ENCODE measurements at regions of chr6 and their contacts with region 1.

Region 1: GRCh38 chr6:52284460-52285176 is at the start of gene MCM3:
- DNase-seq: peak; percentile 92 to 99
- ATAC-seq: peak; percentile 97 to 100 (median 97)
- H3K4me3 ChIP-seq: peak within 1 kb of the TSS; percentile 70
- H3K4me3 Mint-ChIP-seq: peak within 1 kb of the TSS; percentile 4
- H3K27ac ChIP-seq: peak within 1 kb of the TSS; percentile 61
- H3K27ac Mint-ChIP-seq: no peak within 1 kb of the TSS
- H3K4me1 ChIP-seq: peaks cover 11% of the 10 kb centered on the region
- H3K4me1 Mint-ChIP-seq: peaks cover 31 to 33% of the 10 kb centered on the region in 2 donors
- H3K27me3 ChIP-seq: no peaks in the 10 kb centered on the region
- H3K27me3 Mint-ChIP-seq: no peaks in the 10 kb centered on the region
- CTCF ChIP-seq: no peak
- total RNA-seq, gene MCM3: 26.4 to 46.2 (median 31.5) TPM

Region 2: DNA sequence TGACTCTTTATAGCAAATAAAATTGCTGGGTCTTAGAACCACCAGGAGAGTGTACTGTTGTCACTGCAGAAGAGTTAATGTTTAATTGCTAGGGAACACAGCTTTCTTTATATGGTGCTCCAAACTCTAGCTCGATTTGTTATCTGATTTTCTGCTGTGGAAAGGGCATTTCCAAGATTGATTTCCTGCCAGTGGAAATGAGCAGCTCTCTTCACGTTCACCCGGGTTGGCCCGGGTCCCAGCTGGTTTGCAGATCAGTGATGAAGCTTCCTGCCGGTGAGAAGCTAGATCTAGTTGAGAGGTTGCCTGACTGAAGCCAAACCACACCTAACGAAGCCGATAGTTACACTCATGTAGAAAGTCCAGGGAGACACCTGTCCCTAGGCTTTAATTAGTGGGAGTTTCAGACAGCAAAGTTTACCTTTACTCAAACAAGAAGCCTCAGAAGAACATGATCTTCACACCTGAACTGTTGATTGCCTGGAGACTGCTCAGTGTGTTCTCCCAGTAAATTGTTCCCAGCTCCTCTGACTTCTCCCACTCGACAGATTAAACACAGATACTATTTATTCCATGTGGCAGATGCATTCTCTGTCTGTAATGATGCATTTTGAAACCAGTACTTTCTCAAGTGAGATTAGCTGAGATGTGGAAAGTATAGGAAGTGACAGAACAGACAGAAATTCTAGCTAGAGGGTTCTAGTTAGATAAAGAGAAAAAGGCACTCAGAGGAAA is 105.2 kb after region 1 on chr6:
- intact Hi-C with region 1: loop called (anchors 2 kb)
- DNase-seq: peak in 1 of 2 donors; percentile 81
- ATAC-seq: peak; percentile 56 to 69 (median 59)
- H3K4me3 ChIP-seq: no peak overlapping the region
- H3K4me3 Mint-ChIP-seq: peak overlapping the region; percentile 91
- H3K27ac ChIP-seq: peak overlapping the region; percentile 82
- H3K27ac Mint-ChIP-seq: peak overlapping the region; percentile 96 to 98
- H3K4me1 ChIP-seq: peaks cover 25% of the 10 kb centered on the region
- H3K4me1 Mint-ChIP-seq: peaks cover 42 to 52% of the 10 kb centered on the region in 2 donors
- H3K27me3 ChIP-seq: no peaks in the 10 kb centered on the region
- H3K27me3 Mint-ChIP-seq: no peaks in the 10 kb centered on the region
- CTCF ChIP-seq: peak; percentile 35

Region 3: DNA sequence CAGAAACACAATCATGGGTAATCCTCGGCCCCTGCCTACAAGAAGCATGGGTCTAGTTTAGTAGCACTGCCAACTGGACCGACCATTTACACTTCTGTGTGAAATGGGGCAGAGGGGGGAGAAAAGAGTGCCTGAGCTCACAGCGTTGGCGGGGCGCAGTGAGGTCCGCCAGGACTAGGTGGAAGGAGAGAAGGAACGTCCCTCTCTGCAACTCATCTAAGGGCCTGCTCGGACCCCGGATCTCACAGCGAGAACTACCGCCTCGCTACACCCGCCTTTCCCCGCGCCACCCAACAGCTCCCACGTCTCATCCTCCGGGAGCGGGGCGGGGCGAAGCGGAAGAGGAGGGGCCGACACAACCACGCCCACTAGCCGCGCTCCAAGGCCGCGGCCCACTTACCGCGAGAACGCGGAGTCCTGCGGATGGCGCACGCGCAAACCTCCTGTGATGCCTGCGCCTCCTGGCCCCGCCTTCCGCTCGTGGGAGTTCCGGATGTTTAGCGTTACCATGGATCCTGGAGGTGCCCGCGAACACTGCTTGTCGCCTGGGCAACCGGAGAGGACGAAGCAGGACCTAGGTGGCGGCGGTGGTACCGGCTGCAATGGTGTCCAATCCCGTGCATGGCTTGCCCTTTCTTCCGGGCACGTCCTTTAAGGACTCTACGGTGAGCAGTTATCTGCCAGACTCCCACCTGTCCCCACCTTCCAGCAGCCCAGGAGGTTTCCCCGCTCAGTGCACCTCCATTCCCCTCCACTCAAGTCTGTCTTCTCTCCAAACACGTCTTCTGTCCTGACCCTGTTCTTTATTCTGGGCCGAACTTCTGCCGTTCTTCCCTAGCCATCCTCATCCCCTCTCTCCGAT is 135.4 kb after region 1 on chr6 and contains the start of gene EFHC1:
- intact Hi-C with region 1: loop called (anchors 1 kb)
- DNase-seq: peak; percentile 97 to 100
- ATAC-seq: peak; percentile 91 to 98 (median 93)
- H3K4me3 ChIP-seq: peak within 1 kb of the TSS; percentile 87
- H3K4me3 Mint-ChIP-seq: no peak within 1 kb of the TSS
- H3K27ac ChIP-seq: peak within 1 kb of the TSS; percentile 71
- H3K27ac Mint-ChIP-seq: no peak within 1 kb of the TSS
- H3K4me1 ChIP-seq: peaks cover 15% of the 10 kb centered on the region
- H3K4me1 Mint-ChIP-seq: no peaks in the 10 kb centered on the region
- H3K27me3 ChIP-seq: no peaks in the 10 kb centered on the region
- H3K27me3 Mint-ChIP-seq: peaks cover 0 to 7% of the 10 kb centered on the region in 2 donors
- CTCF ChIP-seq: no peak
- total RNA-seq, gene EFHC1: 10.7 to 20.9 (median 13.7) TPM

Region 4: GRCh38 chr6:52664186-52664990 is 379.8 kb after region 1 on chr6:
- intact Hi-C with region 1: loop called (anchors 2 kb)
- DNase-seq: peak; percentile 33 to 67
- ATAC-seq: peak; percentile 79 to 87 (median 80)
- H3K4me3 ChIP-seq: peak overlapping the region; percentile 42
- H3K4me3 Mint-ChIP-seq: no peak overlapping the region
- H3K27ac ChIP-seq: no peak overlapping the region
- H3K27ac Mint-ChIP-seq: no peak overlapping the region
- H3K4me1 ChIP-seq: peaks cover 11% of the 10 kb centered on the region
- H3K4me1 Mint-ChIP-seq: peaks cover 0 to 3% of the 10 kb centered on the region in 2 donors
- H3K27me3 ChIP-seq: peaks cover 4% of the 10 kb centered on the region
- H3K27me3 Mint-ChIP-seq: peaks cover 0 to 5% of the 10 kb centered on the region in 2 donors
- CTCF ChIP-seq: no peak